ENCODE measurements at regions of chr1 and their contacts with region 1.

Region 1: DNA sequence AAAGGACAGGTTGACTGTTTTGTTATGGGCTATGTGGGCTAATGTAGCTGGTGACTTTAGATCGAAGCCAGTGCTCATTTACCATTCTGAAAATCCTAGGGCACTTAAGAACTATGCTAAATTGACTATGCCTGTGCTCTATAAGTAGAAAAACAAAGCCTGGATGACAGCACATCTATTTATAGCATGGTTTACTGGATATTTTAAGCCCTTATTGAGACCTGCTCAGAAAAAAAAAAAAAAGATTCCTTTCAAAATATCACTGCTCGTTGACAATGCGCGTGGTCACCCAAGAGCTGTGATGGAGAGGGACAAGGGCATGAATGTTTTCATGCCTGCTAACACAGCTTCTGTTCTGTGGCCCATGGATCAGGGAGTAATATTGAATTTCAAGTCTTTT is 48.1 kb downstream of the CAMSAP2 start:
- DNase-seq: no peak
- ATAC-seq: no peak
- H3K4me3 ChIP-seq: no peak overlapping the region
- H3K27ac ChIP-seq: no peak overlapping the region
- H3K4me1 ChIP-seq: no peaks in the 10 kb centered on the region
- H3K27me3 ChIP-seq: no peaks in the 10 kb centered on the region

Region 2: GRCh38 chr1:200620273-200621131 is 166.3 kb before region 1 on chr1 and contains the start of gene KIF14:
- intact Hi-C with region 1: loop called in 1 of 4 experiments (anchors 5 kb)
- DNase-seq: peak; percentile 95 to 97 (median 96)
- ATAC-seq: peak; percentile 99 to 100
- H3K4me3 ChIP-seq: peak within 1 kb of the TSS; percentile 65
- H3K27ac ChIP-seq: no peak within 1 kb of the TSS
- H3K4me1 ChIP-seq: no peaks in the 10 kb centered on the region
- H3K27me3 ChIP-seq: no peaks in the 10 kb centered on the region
- total RNA-seq, gene KIF14: 0.08 to 0.37 (median 0.19) TPM

Region 3: GRCh38 chr1:200866521-200866920 is 79.7 kb after region 1 on chr1:
- intact Hi-C with region 1: no loop called
- DNase-seq: no peak
- ATAC-seq: peak in 1 of 2 donors; percentile 26
- H3K4me3 ChIP-seq: no peak overlapping the region
- H3K27ac ChIP-seq: no peak overlapping the region
- H3K4me1 ChIP-seq: no peaks in the 10 kb centered on the region
- H3K27me3 ChIP-seq: no peaks in the 10 kb centered on the region